ENCODE measurements at regions of chr3 and their contacts with region 1.

Region 1: GRCh38 chr3:115836944-115837343 is 213.6 kb downstream of the GAP43 start:
- DNase-seq: peak; percentile 23
- CTCF ChIP-seq: peak; percentile 41

Region 2: GRCh38 chr3:115692887-115693524 is 143.9 kb before region 1 on chr3:
- CTCF ChIA-PET with region 1: no interaction called
- POLR2A ChIA-PET with region 1: no interaction called
- DNase-seq: peak; percentile 65
- CTCF ChIP-seq: peak; percentile 77

Region 3: GRCh38 chr3:115814778-115815380 is 22.1 kb before region 1 on chr3:
- CTCF ChIA-PET with region 1: interaction called, 11 read pairs
- POLR2A ChIA-PET with region 1: no interaction called
- DNase-seq: peak; percentile 39
- CTCF ChIP-seq: peak; percentile 91

Region 4: DNA sequence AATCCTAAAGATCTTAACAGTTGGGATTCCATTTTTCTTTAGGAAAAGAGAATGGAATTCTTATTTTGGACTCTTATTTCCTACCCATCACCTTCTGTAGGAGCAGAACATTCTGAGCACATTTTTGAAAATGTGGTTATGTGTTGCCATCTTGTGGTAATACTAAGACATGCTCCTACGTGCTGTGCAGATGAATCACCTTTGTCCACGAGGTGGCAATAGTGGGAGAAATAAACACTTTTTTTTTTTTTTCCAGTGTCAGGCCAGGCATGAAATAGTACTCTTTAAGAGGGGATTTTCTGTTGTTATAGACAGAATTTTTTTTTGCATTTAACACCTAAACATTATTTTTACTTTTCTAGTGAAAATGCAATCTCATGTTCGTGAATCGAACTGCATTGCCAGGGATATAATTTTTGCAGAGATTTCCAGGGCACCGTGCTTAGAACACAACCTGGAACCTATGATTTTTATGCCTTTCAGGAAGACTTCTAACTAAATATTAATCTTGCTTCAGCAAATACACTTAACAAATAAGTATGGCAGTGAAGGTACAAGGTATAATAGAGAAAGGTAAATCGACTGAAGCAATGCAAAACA is 17.1 kb before region 1 on chr3:
- CTCF ChIA-PET with region 1: interaction called, 18 read pairs
- POLR2A ChIA-PET with region 1: no interaction called
- DNase-seq: peak; percentile 65
- CTCF ChIP-seq: peak; percentile 100

Region 5: GRCh38 chr3:115825046-115825445 is 11.9 kb before region 1 on chr3:
- CTCF ChIA-PET with region 1: interaction called, 38 read pairs
- POLR2A ChIA-PET with region 1: no interaction called
- DNase-seq: no peak
- CTCF ChIP-seq: no peak

Region 6: GRCh38 chr3:115848641-115849040 is 11.7 kb after region 1 on chr3:
- CTCF ChIA-PET with region 1: interaction called, 38 read pairs
- POLR2A ChIA-PET with region 1: no interaction called
- DNase-seq: no peak
- CTCF ChIP-seq: no peak